ENCODE measurements at regions of chr2 and their contacts with region 1.

Region 1: GRCh38 chr2:215843579-215843978 is 169.8 kb downstream of the MREG start:
- DNase-seq: peak; percentile 73 to 84
- H3K4me3 ChIP-seq: no peak overlapping the region
- H3K27ac ChIP-seq: peak overlapping the region; percentile 65 to 67
- H3K4me1 ChIP-seq: peaks cover 0 to 30% (median 17%) of the 10 kb centered on the region in 4 donors
- H3K27me3 ChIP-seq: no peaks in the 10 kb centered on the region
- CTCF ChIP-seq: peak in 1 of 2 experiments; percentile 24

Region 2: DNA sequence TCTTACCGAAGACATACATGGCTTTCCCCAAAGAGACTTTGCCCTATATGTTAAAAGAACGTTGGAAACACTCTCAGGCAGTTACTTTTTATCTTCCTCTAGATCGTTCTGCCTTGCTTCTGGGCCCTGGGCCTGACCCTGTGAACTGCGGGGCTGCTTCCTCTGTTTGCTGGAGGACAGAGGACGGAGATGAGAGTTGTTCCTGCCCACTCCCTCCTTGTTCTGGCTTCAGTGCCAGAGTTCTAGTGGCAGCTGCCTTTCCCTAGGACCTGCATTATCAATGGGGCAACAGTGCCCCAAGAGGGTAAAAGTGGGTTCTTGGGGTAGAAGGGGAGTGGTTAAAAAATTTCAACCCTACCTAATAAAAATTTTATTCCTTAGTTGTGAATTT is 401.2 kb before region 1 on chr2:
- intact Hi-C with region 1: loop called (anchors 10 kb)
- DNase-seq: no peak
- H3K4me3 ChIP-seq: no peak overlapping the region
- H3K27ac ChIP-seq: no peak overlapping the region
- H3K4me1 ChIP-seq: peaks cover 0 to 29% (median 7%) of the 10 kb centered on the region in 4 donors
- H3K27me3 ChIP-seq: no peaks in the 10 kb centered on the region
- CTCF ChIP-seq: no peak

Region 3: DNA sequence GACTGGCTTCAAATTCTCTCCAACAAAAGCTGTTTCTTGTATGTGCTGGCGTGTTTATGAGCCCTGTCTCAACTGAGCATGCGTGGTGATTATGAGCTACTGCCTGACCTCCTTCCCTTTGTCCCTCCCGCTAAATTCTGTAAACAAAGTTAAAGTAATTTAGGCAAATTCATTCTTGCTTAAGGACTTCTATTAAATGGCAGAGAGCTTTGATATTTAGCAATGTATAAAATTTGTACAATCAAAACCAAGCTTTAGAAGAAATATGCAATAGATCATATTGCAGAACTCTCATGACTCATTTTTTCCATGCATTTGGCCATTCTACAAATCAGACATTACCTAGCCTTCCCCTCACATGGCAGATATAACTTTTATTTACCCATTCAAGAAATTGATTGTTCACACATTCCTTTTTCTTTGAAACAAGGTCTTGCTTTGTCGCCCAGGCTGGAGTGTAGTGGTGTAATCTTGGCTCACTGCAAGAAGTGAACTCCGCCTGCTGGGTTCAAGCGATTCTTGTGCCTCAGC is 807.8 kb after region 1 on chr2:
- intact Hi-C with region 1: no loop called
- DNase-seq: no peak
- H3K4me3 ChIP-seq: no peak overlapping the region
- H3K27ac ChIP-seq: peak overlapping the region in 1 of 2 donors; percentile 54
- H3K4me1 ChIP-seq: peaks cover 0 to 92% (median 50%) of the 10 kb centered on the region in 4 donors
- H3K27me3 ChIP-seq: no peaks in the 10 kb centered on the region
- CTCF ChIP-seq: no peak

Measured in tibial artery (tissue), 4 donors.